Activated naive CD4-positive, alpha-beta T cell treated with anti-CD3 and anti-CD28 coated beads for 36 hours (primary cell): ENCODE measurements at regions of chr10 and their contacts with region 1.

Region 1: DNA sequence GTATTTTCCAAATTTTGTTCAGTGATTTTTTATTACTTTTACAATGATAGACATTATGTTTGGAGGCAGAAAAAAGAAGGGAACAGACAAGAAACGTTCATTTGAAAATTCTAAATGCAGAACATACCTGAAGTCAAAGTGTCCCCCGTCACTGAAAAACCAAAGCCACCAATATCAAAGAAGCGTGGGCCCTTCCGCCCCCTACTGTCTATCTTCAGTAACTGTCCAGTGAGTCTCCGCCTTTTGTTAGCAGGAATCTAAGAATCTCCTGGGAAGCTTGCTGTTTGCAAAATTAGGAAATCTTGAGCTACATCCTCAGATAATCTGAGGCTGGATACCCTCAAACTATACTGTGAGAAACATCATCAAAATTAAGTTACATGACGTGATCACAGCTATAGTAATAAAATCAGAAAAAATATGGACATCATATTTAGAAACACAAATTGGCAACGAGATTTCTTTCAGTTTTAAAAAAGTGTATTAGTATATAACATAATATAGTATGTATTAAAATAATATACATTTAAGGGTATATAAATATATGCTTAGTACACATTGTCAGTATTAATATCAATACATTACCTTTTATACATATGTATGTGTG is 169.3 kb upstream of the AKR1E2 start:
- DNase-seq: peak; percentile 58
- H3K4me3 Mint-ChIP-seq: no peak overlapping the region
- H3K27ac Mint-ChIP-seq: no peak overlapping the region
- H3K4me1 Mint-ChIP-seq: peaks cover 18% of the 10 kb centered on the region
- H3K27me3 Mint-ChIP-seq: peaks cover 9% of the 10 kb centered on the region

Region 2: GRCh38 chr10:3186368-3186767 is 1470.3 kb before region 1 on chr10:
- CTCF ChIA-PET with region 1: no interaction called
- intact Hi-C with region 1: loop called (anchors 1 kb)
- DNase-seq: peak; percentile 85
- H3K4me3 Mint-ChIP-seq: no peak overlapping the region
- H3K27ac Mint-ChIP-seq: no peak overlapping the region
- H3K4me1 Mint-ChIP-seq: peaks cover 16% of the 10 kb centered on the region
- H3K27me3 Mint-ChIP-seq: peaks cover 4% of the 10 kb centered on the region

Region 3: GRCh38 chr10:3312403-3312802 is 1344.3 kb before region 1 on chr10:
- CTCF ChIA-PET with region 1: no interaction called
- intact Hi-C with region 1: loop called (anchors 5 kb)
- DNase-seq: no peak
- H3K4me3 Mint-ChIP-seq: no peak overlapping the region
- H3K27ac Mint-ChIP-seq: no peak overlapping the region
- H3K4me1 Mint-ChIP-seq: peaks cover 6% of the 10 kb centered on the region
- H3K27me3 Mint-ChIP-seq: peaks cover 22% of the 10 kb centered on the region

Region 4: GRCh38 chr10:3740157-3740871 is 916.4 kb before region 1 on chr10:
- CTCF ChIA-PET with region 1: no interaction called
- intact Hi-C with region 1: loop called (anchors 5 kb)
- DNase-seq: no peak
- H3K4me3 Mint-ChIP-seq: no peak overlapping the region
- H3K27ac Mint-ChIP-seq: peak overlapping the region; percentile 59
- H3K4me1 Mint-ChIP-seq: peaks cover 31% of the 10 kb centered on the region
- H3K27me3 Mint-ChIP-seq: no peaks in the 10 kb centered on the region

Region 5: DNA sequence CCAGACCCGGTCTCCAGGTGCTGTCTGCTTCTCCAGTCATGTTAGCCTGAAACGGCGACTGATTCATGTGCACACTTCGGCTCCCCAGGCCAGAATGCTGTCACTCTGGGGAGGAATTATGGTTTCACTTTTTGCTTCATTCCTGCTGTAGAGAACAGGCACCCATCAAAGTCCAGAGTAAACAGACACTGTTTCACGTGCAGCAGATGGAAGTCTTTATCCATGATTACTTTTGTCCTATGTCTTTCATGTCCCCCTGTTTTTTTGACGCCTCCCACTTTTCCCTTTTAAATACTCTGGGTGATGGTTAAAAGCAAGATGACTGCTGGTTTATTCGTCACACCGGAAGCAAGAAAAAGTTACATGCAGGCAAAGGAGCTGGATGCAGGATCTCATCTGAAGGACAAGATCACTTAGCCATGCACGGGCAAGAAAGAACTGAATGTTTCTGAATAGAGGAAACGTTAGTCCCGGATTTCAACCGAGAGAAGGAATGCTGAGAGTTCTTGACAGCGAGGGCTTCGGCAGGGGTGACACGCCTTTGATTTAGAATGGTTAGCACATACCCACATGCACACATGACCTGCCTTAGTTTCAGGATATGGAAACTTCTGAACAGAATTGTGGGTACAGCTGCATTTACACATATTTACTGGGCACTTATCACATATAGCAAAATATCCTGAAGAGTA is 621.6 kb before region 1 on chr10:
- CTCF ChIA-PET with region 1: no interaction called
- intact Hi-C with region 1: loop called (anchors 10 kb)
- DNase-seq: peak; percentile 43
- H3K4me3 Mint-ChIP-seq: peak overlapping the region; percentile 41
- H3K27ac Mint-ChIP-seq: no peak overlapping the region
- H3K4me1 Mint-ChIP-seq: peaks cover 30% of the 10 kb centered on the region
- H3K27me3 Mint-ChIP-seq: no peaks in the 10 kb centered on the region

Region 6: DNA sequence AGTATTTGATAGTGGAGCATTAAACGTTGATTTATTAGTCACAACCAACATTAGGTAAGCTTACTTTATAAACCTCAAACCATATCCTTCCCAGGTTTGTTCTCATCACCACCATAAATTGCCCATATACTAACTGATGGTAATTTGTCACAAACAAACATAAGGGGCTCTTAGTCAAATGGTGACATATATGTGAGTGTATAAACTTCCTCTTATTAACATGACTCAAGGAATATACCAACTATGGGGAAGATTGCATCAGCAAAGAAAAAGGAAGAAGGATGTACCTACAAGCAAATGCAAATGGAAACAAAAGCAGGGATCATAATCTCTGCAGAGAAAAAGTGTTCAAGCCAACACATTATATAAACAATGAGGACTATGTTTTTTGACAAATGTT is 248.9 kb before region 1 on chr10:
- CTCF ChIA-PET with region 1: no interaction called
- intact Hi-C with region 1: loop called (anchors 2 kb)
- DNase-seq: no peak
- H3K4me3 Mint-ChIP-seq: no peak overlapping the region
- H3K27ac Mint-ChIP-seq: no peak overlapping the region
- H3K4me1 Mint-ChIP-seq: peaks cover 23% of the 10 kb centered on the region
- H3K27me3 Mint-ChIP-seq: peaks cover 8% of the 10 kb centered on the region

Region 7: GRCh38 chr10:4623757-4624420 is 32.8 kb before region 1 on chr10:
- CTCF ChIA-PET with region 1: no interaction called
- intact Hi-C with region 1: no loop called
- DNase-seq: no peak
- H3K4me3 Mint-ChIP-seq: no peak overlapping the region
- H3K27ac Mint-ChIP-seq: no peak overlapping the region
- H3K4me1 Mint-ChIP-seq: no peaks in the 10 kb centered on the region
- H3K27me3 Mint-ChIP-seq: peaks cover 5% of the 10 kb centered on the region

Region 8: DNA sequence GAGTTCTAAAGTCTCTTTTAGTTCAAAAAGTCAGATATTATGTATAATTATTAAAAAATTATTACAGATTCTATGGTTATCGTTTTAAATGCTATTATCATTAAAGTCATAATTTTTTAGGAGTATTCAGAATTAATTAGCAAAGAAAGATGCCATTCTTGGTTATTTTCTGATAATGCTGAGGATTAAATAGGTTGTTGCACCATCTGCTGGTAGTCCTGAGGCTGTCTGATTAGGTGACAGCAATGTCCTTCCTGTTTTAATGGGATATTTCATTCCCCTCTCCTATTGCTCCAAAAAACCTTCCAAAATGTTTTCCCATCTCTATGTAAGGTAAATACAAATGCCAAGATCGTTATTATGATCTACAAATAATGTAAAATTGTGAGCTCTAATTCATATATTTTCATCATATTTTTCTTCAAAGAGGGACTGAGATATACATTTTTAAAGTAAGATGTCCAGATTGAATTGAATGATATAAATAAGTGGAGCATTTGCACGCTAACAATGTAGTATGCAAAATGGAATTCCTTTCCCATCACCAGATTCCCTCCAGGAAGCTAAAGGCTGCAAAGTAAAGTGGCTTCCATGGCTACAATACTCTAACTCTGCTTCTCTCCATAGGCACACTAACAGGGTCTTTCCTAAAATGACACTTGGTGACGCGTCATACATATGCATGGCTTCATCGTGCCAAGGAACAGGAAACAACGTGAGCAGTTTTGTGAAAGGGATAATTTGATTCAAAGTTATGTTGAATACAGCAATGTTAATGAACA is 110.5 kb after region 1 on chr10:
- CTCF ChIA-PET with region 1: no interaction called
- intact Hi-C with region 1: loop called (anchors 5 kb)
- DNase-seq: peak; percentile 17
- H3K4me3 Mint-ChIP-seq: no peak overlapping the region
- H3K27ac Mint-ChIP-seq: no peak overlapping the region
- H3K4me1 Mint-ChIP-seq: peaks cover 3% of the 10 kb centered on the region
- H3K27me3 Mint-ChIP-seq: peaks cover 11% of the 10 kb centered on the region